Tibial artery (tissue), 4 donors: ENCODE measurements at regions of chr1 and their contacts with region 1.

Region 1: DNA sequence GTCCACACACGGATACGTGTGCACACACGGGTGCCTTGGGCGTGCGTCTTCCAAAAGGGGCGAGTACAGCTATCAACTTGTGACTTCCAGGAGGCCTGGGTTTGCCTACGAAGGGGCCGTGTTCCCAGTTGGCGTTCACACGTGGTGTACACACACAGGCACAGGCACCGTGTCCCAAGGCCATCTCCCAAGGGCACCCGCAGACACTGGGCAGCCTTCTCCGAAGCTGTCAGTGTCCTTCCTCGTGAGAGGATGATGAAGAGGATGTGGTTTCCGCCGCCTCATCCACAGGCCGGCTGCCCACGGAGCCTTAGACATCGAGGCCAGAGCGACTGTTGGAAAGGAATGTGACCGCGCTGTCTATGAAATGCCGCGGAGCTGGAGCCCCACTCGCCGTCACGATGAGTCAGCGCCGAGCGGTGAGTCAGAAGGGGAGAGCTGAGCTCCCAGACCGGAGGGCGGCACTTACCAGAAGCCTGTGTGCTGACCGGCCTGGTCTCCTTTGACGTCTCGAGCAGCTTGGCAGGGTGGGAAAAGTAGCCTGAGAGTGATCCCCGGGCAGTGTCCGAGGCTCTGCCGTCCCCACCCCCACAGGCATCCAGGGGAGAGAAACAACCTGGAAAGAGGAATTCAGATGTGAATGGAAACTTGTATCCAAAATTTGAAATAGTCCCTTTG is 141.4 kb upstream of the ARHGEF16 start:
- DNase-seq: peak; percentile 98 to 99
- H3K4me3 ChIP-seq: peak overlapping the region; percentile 11 to 47
- H3K27ac ChIP-seq: peak overlapping the region; percentile 96 to 97
- H3K4me1 ChIP-seq: peaks cover 4 to 84% (median 57%) of the 10 kb centered on the region in 4 donors
- H3K27me3 ChIP-seq: no peaks in the 10 kb centered on the region
- CTCF ChIP-seq: peak in 1 of 2 experiments; percentile 9

Region 2: DNA sequence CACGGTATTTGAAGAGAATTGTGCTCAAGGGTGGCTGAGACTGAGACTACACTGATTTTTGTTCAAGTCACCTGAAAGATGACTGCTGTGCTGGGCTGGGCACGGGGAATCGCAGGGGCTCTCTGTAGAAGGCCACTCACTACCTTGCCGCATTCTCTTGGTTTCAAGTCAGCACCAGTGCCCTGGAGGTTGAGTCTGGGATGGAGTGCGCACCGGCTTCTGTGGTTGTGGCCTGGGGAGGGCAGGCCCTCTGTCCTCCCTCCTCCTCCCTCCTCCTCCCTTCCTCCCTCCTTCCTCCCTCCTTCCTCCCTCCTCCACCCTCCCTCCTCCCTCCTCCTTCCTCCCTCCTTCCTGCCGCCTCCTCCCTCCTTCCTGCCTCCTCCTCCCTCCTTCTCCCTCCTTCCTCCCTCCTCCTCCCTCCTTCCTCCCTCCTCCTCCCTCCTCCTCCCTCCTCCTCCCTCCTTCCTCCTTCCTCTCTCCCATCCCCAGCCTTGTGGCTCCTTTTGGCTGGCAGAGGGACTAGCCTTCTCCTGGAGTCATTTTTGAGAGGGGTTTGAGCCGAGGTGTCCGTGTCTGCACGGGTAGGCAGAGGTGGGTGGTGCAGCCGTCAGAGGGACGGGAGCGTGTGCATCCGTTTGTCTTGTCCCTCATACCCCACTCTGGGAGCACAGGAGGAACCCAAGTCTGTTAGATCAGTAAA is 911.9 kb before region 1 on chr1:
- intact Hi-C with region 1: no loop called
- DNase-seq: no peak
- H3K4me3 ChIP-seq: no peak overlapping the region
- H3K27ac ChIP-seq: no peak overlapping the region
- H3K4me1 ChIP-seq: no peaks in the 10 kb centered on the region
- H3K27me3 ChIP-seq: no peaks in the 10 kb centered on the region
- CTCF ChIP-seq: no peak

Region 3: GRCh38 chr1:3207217-3207848 is 105.7 kb before region 1 on chr1:
- intact Hi-C with region 1: loop called (anchors 5 kb)
- DNase-seq: peak in 1 of 2 donors; percentile 83
- H3K4me3 ChIP-seq: peak overlapping the region in 1 of 2 donors; percentile 34
- H3K27ac ChIP-seq: peak overlapping the region; percentile 91 to 98
- H3K4me1 ChIP-seq: peaks cover 6 to 71% (median 46%) of the 10 kb centered on the region in 4 donors
- H3K27me3 ChIP-seq: no peaks in the 10 kb centered on the region
- CTCF ChIP-seq: peak in 1 of 2 experiments; percentile 16

Region 4: GRCh38 chr1:3275471-3276340 is 37.3 kb before region 1 on chr1:
- intact Hi-C with region 1: loop called (anchors 5 kb)
- DNase-seq: peak; percentile 51 to 93
- H3K4me3 ChIP-seq: no peak overlapping the region
- H3K27ac ChIP-seq: peak overlapping the region; percentile 81 to 83
- H3K4me1 ChIP-seq: peaks cover 0 to 68% (median 36%) of the 10 kb centered on the region in 4 donors
- H3K27me3 ChIP-seq: no peaks in the 10 kb centered on the region
- CTCF ChIP-seq: no peak

Region 5: DNA sequence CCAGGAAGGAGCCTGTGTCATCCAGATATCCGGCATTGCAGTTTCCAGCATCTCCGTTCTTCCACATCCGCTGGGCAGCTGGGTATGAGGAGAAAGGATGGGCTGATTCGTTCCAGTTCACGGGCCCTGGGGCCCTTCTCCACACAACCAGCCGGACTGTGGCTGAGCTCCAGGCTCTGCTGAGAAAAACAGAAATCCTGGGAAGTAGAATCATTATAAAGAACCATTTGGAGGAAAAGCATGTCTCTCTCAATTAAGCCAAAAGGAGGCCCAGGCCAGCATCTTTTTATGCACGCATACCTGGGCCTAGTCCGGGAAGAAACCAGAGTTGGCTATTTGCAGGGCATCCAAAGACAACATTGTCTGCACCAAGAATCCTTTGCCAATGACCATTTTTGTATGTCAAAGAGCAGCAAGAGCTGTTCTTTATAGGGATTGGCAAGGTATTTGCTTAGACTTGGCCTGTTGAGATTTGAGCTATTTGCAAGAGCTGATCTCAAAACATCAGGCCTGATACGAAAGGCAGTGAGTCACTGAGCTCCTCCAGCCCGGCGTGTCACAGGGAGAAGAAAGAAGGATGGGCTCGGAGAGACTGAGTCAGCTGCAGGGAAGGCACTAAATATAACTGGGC is 56.5 kb after region 1 on chr1:
- intact Hi-C with region 1: loop called (anchors 5 kb)
- DNase-seq: peak; percentile 90 to 95
- H3K4me3 ChIP-seq: peak overlapping the region in 1 of 2 donors; percentile 6
- H3K27ac ChIP-seq: peak overlapping the region; percentile 89 to 94
- H3K4me1 ChIP-seq: peaks cover 11 to 98% (median 88%) of the 10 kb centered on the region in 4 donors
- H3K27me3 ChIP-seq: no peaks in the 10 kb centered on the region
- CTCF ChIP-seq: no peak